Naive thymus-derived CD4-positive, alpha-beta T cell (primary cell): ENCODE measurements at regions of chr6 and their contacts with region 1.

Region 1: DNA sequence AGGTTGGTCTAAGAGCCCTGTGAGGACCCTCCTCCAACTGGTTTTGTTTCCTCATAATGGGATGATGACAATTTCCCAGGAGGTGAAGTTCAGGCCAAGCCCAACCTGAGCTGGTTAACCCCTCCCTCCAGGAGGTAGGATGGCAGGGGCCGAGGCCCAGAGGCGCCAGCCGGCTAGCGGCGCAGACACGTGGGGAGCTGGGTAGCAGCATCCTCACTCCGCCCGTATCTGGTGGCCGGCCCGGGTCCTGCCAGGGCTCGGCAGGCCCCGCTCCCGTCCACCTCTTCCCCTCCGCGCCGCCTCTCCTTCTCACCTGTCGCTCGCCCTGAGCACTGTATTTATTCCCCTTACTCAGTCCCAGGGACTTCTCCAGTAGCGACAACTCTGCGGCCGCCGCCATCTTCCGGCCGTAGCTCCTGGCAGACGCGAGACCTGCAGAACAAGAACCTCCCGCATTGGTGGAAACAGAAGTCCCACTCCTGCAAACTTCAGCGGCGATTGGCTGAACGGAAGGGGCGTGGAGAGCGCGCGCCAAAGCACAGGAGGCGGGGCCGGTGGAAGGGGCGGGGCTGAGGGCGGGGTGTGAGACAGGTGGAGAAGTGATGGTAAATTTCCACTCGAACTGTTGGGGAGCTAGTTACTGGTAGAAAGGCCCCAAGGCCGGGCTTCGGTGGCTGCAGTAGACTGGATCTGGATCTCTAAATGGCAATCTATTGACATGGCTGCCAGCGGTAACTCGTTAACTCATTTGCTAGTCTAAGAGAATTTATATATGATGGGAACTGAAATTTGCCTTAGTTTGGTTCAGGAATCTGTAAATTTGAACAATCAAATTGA is at the start of gene EEF1E1:
- DNase-seq: peak; percentile 77 to 97 (median 92)
- ATAC-seq: peak; percentile 100
- H3K4me3 ChIP-seq: peak within 1 kb of the TSS; percentile 75
- H3K4me3 Mint-ChIP-seq: peak within 1 kb of the TSS; percentile 85 to 100 (median 98)
- H3K27ac ChIP-seq: peak within 1 kb of the TSS; percentile 78
- H3K27ac Mint-ChIP-seq: peak within 1 kb of the TSS; percentile 91 to 99 (median 95)
- H3K4me1 ChIP-seq: peaks cover 6 to 8% of the 10 kb centered on the region in 2 donors
- H3K4me1 Mint-ChIP-seq: peaks cover 21 to 43% (median 34%) of the 10 kb centered on the region in 7 donors
- H3K27me3 ChIP-seq: no peaks in the 10 kb centered on the region
- H3K27me3 Mint-ChIP-seq: peaks cover 13 to 27% (median 18%) of the 10 kb centered on the region in 5 donors
- total RNA-seq, gene EEF1E1: 10.2 to 41.0 (median 21.0) TPM

Region 2: DNA sequence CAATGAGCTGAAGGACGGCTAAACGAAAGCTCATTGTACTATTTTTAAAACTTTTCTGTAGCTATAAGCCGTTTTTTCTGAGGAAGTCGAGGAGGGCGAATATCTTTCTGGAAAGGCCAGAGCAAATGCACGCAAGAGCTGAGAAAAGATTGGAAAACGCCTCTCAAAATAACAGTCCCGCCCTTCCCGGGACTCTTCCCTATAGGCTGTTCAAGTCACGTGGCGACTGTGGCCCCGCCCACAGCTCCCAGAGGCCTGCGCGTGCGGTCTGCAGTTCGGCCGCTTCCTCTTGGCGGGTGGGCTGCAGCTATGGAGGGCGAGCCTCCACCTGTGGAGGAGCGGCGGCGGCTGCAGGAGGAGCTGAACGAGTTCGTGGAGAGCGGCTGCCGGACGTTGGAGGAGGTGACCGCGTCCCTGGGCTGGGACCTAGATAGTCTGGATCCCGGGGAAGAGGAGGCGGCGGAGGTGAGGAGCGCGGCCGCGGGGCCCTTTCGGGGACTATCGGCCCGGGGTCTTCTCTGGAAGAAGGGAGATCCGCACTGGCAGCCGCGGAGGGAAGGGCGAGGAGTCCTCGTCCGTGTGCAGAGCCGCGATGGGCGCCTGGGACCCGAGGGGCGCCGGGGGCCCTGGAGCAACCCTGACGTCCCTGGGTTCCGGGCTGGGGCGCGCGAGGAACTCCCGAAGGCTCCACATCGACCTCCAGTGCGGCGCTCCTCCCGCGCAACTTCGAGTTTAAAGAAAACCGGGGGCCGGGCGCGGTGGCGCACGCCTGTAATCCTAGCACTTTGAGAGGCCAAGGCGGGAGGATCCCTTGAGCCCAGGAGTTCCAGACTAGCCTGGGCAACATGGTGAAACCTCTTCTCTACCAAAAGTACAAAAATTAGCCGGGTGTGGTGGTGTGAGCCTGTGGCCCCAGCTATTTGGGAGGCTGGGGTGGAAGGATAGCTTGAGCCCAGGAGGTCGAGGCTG is 512.1 kb before region 1 on chr6 and contains the start of gene SNRNP48:
- CTCF ChIA-PET with region 1: no interaction called
- POLR2A ChIA-PET with region 1: no interaction called
- intact Hi-C with region 1: loop called (anchors 1 to 2 kb)
- DNase-seq: peak; percentile 83 to 93 (median 88)
- ATAC-seq: peak; percentile 99
- H3K4me3 ChIP-seq: peak within 1 kb of the TSS; percentile 89
- H3K4me3 Mint-ChIP-seq: peak within 1 kb of the TSS; percentile 93 to 100 (median 99)
- H3K27ac ChIP-seq: peak within 1 kb of the TSS; percentile 77
- H3K27ac Mint-ChIP-seq: peak within 1 kb of the TSS; percentile 90 to 97 (median 94)
- H3K4me1 ChIP-seq: peaks cover 12 to 17% of the 10 kb centered on the region in 2 donors
- H3K4me1 Mint-ChIP-seq: peaks cover 28 to 62% (median 54%) of the 10 kb centered on the region in 7 donors
- H3K27me3 ChIP-seq: no peaks in the 10 kb centered on the region
- H3K27me3 Mint-ChIP-seq: peaks cover 0 to 2% (median 0%) of the 10 kb centered on the region in 5 donors
- total RNA-seq, gene SNRNP48: 8.6 to 30.4 (median 15.3) TPM

Region 3: GRCh38 chr6:8017276-8017701 is 85.1 kb before region 1 on chr6:
- CTCF ChIA-PET with region 1: no interaction called
- POLR2A ChIA-PET with region 1: interaction called, 3 read pairs
- intact Hi-C with region 1: loop called in 1 of 2 experiments (anchors 5 kb)
- DNase-seq: peak in 1 of 9 donors; percentile 46
- ATAC-seq: peak; percentile 74
- H3K4me3 ChIP-seq: no peak overlapping the region
- H3K4me3 Mint-ChIP-seq: peak overlapping the region in 4 of 10 donors; percentile 71 to 95 (median 90)
- H3K27ac ChIP-seq: peak overlapping the region; percentile 64
- H3K27ac Mint-ChIP-seq: peak overlapping the region in 5 of 9 donors; percentile 24 to 98 (median 92)
- H3K4me1 ChIP-seq: no peaks in the 10 kb centered on the region
- H3K4me1 Mint-ChIP-seq: peaks cover 0 to 20% (median 5%) of the 10 kb centered on the region in 7 donors
- H3K27me3 ChIP-seq: no peaks in the 10 kb centered on the region
- H3K27me3 Mint-ChIP-seq: no peaks in the 10 kb centered on the region